OCI-LY7 (cell line): ENCODE measurements at regions of chr5 and their contacts with region 1.

Region 1: GRCh38 chr5:35668319-35668718 is 50.7 kb downstream of the SPEF2 start:
- DNase-seq: no peak
- H3K4me3 ChIP-seq: no peak overlapping the region
- H3K27ac ChIP-seq: no peak overlapping the region
- H3K4me1 ChIP-seq: peaks cover 29% of the 10 kb centered on the region
- CTCF ChIP-seq: no peak

Region 2: GRCh38 chr5:35485487-35485886 is 182.8 kb before region 1 on chr5:
- CTCF ChIA-PET with region 1: no interaction called
- POLR2A ChIA-PET with region 1: no interaction called
- intact Hi-C with region 1: no loop called
- DNase-seq: no peak
- H3K4me3 ChIP-seq: no peak overlapping the region
- H3K27ac ChIP-seq: no peak overlapping the region
- H3K4me1 ChIP-seq: no peaks in the 10 kb centered on the region
- CTCF ChIP-seq: no peak

Region 3: GRCh38 chr5:35657877-35658276 is 10.4 kb before region 1 on chr5:
- CTCF ChIA-PET with region 1: interaction called, 3 read pairs
- POLR2A ChIA-PET with region 1: interaction called, 10 read pairs
- intact Hi-C with region 1: no loop called
- DNase-seq: no peak
- H3K4me3 ChIP-seq: no peak overlapping the region
- H3K27ac ChIP-seq: no peak overlapping the region
- H3K4me1 ChIP-seq: peaks cover 10% of the 10 kb centered on the region
- CTCF ChIP-seq: peak; percentile 42; the same call in 1 of the 2 replicates